Heart right ventricle (tissue), 16 donors: ENCODE measurements at regions of chr2 and their contacts with region 1.

Region 1: GRCh38 chr2:30217644-30218337 is 13.5 kb upstream of the LBH start:
- DNase-seq: peak; percentile 33 to 60
- ATAC-seq: peak; percentile 24 to 75 (median 44)
- H3K4me3 ChIP-seq: no peak overlapping the region
- H3K27ac ChIP-seq: peak overlapping the region in 3 of 10 donors; percentile 10 to 43 (median 37)
- H3K4me1 ChIP-seq: peaks cover 3 to 42% (median 27%) of the 10 kb centered on the region in 9 donors
- H3K27me3 ChIP-seq: no peaks in the 10 kb centered on the region
- CTCF ChIP-seq: no peak

Region 2: GRCh38 chr2:29706171-29706720 is 511.5 kb before region 1 on chr2:
- intact Hi-C with region 1: no loop called
- DNase-seq: no peak
- ATAC-seq: no peak
- H3K4me3 ChIP-seq: no peak overlapping the region
- H3K27ac ChIP-seq: no peak overlapping the region
- H3K4me1 ChIP-seq: no peaks in the 10 kb centered on the region
- H3K27me3 ChIP-seq: peaks cover 0 to 6% (median 0%) of the 10 kb centered on the region in 7 donors
- CTCF ChIP-seq: no peak

Region 3: DNA sequence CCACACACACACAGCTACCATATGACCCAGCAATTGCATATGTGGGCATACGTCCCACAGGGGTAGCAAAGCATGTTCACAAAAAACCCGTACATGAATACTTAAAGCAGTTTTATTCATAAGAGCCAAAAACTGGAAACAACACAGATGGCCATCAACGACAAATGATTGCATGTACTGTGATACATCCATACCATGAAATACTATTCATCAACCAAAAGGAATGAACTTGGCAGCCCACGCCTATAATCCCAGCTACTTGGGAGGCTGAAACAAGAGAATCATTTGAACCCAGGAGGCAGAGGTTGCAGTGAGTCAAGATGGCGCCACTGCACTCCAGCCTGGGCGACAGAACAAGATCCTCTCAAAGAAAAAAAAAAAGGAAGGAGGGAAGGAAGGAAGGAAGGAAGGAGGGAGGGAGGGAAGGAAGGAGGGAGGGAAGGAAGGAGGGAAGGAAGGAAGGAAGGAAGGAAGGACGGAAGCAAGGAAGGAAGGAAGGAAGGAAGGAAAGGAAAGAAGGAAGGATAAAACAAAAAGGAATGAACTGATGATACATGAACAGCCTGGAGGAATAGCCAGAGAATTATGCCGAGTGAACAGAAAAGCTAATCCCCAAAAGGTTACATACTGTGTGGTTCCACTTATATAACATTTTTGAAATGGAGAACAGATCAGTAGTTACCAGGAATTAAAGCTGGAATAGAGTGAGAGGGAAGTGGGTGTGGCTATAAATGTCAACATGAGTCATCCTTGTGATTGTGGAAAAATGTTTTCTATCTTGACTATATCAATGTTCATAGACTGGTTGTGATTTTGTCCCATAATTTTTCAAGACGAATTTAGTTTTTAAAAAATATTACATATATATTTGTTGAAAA is 90.5 kb before region 1 on chr2:
- intact Hi-C with region 1: no loop called
- DNase-seq: no peak
- ATAC-seq: no peak
- H3K4me3 ChIP-seq: no peak overlapping the region
- H3K27ac ChIP-seq: no peak overlapping the region
- H3K4me1 ChIP-seq: no peaks in the 10 kb centered on the region
- H3K27me3 ChIP-seq: peaks cover 0 to 3% (median 0%) of the 10 kb centered on the region in 7 donors
- CTCF ChIP-seq: no peak

Region 4: GRCh38 chr2:30472326-30472725 is 254.5 kb after region 1 on chr2:
- intact Hi-C with region 1: loop called in 1 of 10 experiments (anchors 10 kb)
- DNase-seq: no peak
- ATAC-seq: no peak
- H3K4me3 ChIP-seq: no peak overlapping the region
- H3K27ac ChIP-seq: peak overlapping the region in 3 of 10 donors; percentile 7 to 36 (median 17)
- H3K4me1 ChIP-seq: peaks cover 0 to 28% (median 13%) of the 10 kb centered on the region in 9 donors
- H3K27me3 ChIP-seq: no peaks in the 10 kb centered on the region
- CTCF ChIP-seq: no peak